HepG2 (cell line): ENCODE measurements at regions of chr12 and their contacts with region 1.

Region 1: DNA sequence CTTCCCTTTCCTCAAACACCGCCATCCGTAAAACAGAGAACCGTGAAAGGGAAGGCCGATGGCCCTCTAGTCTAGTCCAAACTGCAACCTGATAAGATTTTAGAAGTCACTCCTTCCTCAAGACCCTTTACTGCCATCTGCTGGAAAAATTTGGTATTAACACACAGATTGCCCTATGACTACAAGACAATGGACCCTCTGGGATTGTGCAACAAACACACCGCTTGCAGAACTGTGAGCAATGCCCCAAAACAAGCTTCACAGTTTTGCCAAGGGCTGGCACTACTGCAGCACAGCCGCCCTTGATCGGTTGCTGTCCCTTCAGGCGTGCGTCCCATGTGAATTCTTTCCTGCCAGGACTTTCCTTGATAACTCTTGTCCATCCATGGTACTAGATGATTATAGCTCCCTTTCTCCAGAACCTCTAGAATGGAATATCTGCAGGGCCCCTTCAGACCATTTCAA is 23.1 kb downstream of the LLPH start:
- DNase-seq: peak; percentile 93
- ATAC-seq: peak; percentile 96
- H3K4me3 ChIP-seq: peak overlapping the region in 1 of 3 experiments; percentile 12; a peak in 2 of 6 replicates
- H3K27ac ChIP-seq: no peak overlapping the region
- H3K4me1 ChIP-seq: peaks cover 12% of the 10 kb centered on the region
- H3K27me3 ChIP-seq: no peaks in the 10 kb centered on the region
- CTCF ChIP-seq: peak; percentile 88
- EP300 ChIP-seq: no peak
- POLR2A ChIP-seq: no peak
- RAD21 ChIP-seq: peak; percentile 72

Region 2: DNA sequence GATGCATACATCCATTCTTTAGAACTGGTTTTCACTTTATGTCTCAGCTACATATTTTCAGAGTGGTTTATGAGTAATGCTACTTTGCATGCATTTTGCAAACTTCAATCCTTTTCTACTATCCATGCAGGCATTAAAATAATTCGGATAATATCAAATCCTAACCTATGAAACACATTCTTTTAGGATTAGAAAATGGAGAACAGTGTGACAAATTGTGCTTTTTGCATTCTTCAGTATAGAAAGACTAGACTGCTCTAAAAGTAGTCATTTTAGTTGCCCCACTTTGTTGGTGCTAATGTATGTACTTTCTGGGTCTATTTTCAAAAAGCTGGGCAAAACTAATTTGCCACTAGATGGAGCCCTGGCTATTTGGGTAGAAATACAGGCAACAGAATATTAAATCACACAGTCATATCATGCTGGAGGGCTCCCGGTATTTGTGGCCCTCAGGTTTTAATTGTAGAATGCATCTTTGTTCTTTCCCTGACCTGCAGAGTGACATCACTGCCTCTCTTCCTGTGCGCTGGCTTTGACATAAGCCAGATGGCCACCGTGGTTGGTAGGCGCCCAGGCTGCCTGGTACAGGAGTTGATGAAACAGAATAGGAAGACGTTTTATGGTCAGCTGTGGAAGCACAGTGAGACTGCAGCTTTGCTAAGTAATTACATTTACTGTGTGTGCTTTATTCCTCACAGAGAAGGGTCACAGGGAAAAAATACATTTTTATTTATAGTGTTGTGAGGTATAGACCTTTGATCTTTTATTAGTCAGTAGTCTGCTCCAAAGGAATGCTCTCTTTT is 800.9 kb before region 1 on chr12:
- CTCF ChIA-PET with region 1: interaction called, 6 read pairs
- POLR2A ChIA-PET with region 1: no interaction called
- in situ Hi-C with region 1: no loop called
- intact Hi-C with region 1: loop called (anchors 2 kb)
- DNase-seq: peak; percentile 37
- ATAC-seq: peak; percentile 66
- H3K4me3 ChIP-seq: no peak overlapping the region
- H3K27ac ChIP-seq: no peak overlapping the region
- H3K4me1 ChIP-seq: peaks cover 6% of the 10 kb centered on the region; the same call in 1 of the 2 replicates
- H3K27me3 ChIP-seq: no peaks in the 10 kb centered on the region
- CTCF ChIP-seq: peak; percentile 75
- EP300 ChIP-seq: no peak
- POLR2A ChIP-seq: no peak
- RAD21 ChIP-seq: peak; percentile 66

Region 3: GRCh38 chr12:65327207-65328076 is 780.0 kb before region 1 on chr12:
- CTCF ChIA-PET with region 1: no interaction called
- POLR2A ChIA-PET with region 1: no interaction called
- in situ Hi-C with region 1: loop called (anchors 10 kb)
- intact Hi-C with region 1: no loop called
- DNase-seq: peak; percentile 97
- ATAC-seq: peak; percentile 100
- H3K4me3 ChIP-seq: peak overlapping the region; percentile 29 to 54 (median 36); a peak in 5 of 6 replicates
- H3K27ac ChIP-seq: peak overlapping the region; percentile 87
- H3K4me1 ChIP-seq: peaks cover 40% of the 10 kb centered on the region
- H3K27me3 ChIP-seq: no peaks in the 10 kb centered on the region
- CTCF ChIP-seq: no peak
- EP300 ChIP-seq: peak; percentile 21 to 79; a peak in 3 of 4 replicates
- POLR2A ChIP-seq: 0 out of 4 replicates have a peak, but pooled peaks of 1 of the 2 experiments have one; percentile 40
- RAD21 ChIP-seq: no peak

Region 4: DNA sequence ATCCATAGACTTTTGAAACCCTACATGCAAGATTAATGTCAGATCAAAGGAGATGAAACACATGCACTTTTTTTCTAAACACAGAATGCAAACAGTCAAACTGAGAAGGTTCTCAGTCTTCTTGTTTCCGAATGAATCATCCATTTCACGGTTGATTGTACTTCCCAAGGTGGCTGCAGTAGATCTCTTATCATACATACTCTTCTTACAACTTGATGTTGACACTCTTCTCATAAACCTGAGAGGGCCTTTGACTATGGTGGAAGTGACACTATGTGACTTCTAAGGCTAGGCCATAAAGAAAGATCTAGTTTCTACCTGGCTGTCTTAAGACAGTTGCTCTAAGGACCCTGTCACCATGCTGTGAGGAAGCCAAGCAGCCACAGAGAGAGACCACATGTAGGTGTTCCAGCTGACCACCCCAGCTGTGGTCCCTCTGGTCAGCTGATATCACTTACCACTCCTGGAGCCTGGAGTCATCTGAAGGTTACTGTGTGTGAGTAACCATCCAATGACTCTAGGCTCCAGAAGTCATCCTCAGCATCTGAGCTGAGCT is 350.4 kb before region 1 on chr12:
- CTCF ChIA-PET with region 1: no interaction called
- POLR2A ChIA-PET with region 1: no interaction called
- in situ Hi-C with region 1: no loop called
- intact Hi-C with region 1: no loop called
- DNase-seq: no peak
- ATAC-seq: no peak
- H3K4me3 ChIP-seq: no peak overlapping the region
- H3K27ac ChIP-seq: no peak overlapping the region
- H3K4me1 ChIP-seq: no peaks in the 10 kb centered on the region
- H3K27me3 ChIP-seq: peaks cover 0 to 41% of the 10 kb centered on the region in 2 experiments; a peak in 3 of 5 replicates
- CTCF ChIP-seq: no peak
- EP300 ChIP-seq: no peak
- POLR2A ChIP-seq: no peak
- RAD21 ChIP-seq: no peak